ENCODE measurements at regions of chr16 and their contacts with region 1.

Region 1: GRCh38 chr16:4402439-4403132 is 13.8 kb downstream of the CORO7 start:
- DNase-seq: peak; percentile 52
- H3K4me3 Mint-ChIP-seq: no peak overlapping the region
- H3K27ac Mint-ChIP-seq: no peak overlapping the region
- H3K4me1 Mint-ChIP-seq: no peaks in the 10 kb centered on the region
- H3K27me3 Mint-ChIP-seq: no peaks in the 10 kb centered on the region

Region 2: GRCh38 chr16:4288148-4288921 is 114.3 kb before region 1 on chr16:
- intact Hi-C with region 1: loop called (anchors 5 kb)
- DNase-seq: peak; percentile 70
- H3K4me3 Mint-ChIP-seq: no peak overlapping the region
- H3K27ac Mint-ChIP-seq: peak overlapping the region; percentile 63
- H3K4me1 Mint-ChIP-seq: peaks cover 14% of the 10 kb centered on the region
- H3K27me3 Mint-ChIP-seq: no peaks in the 10 kb centered on the region

Region 3: GRCh38 chr16:4358831-4359561 is 43.6 kb before region 1 on chr16:
- intact Hi-C with region 1: loop called (anchors 1 kb)
- DNase-seq: peak; percentile 49
- H3K4me3 Mint-ChIP-seq: no peak overlapping the region
- H3K27ac Mint-ChIP-seq: peak overlapping the region; percentile 34
- H3K4me1 Mint-ChIP-seq: no peaks in the 10 kb centered on the region
- H3K27me3 Mint-ChIP-seq: no peaks in the 10 kb centered on the region

Region 4: DNA sequence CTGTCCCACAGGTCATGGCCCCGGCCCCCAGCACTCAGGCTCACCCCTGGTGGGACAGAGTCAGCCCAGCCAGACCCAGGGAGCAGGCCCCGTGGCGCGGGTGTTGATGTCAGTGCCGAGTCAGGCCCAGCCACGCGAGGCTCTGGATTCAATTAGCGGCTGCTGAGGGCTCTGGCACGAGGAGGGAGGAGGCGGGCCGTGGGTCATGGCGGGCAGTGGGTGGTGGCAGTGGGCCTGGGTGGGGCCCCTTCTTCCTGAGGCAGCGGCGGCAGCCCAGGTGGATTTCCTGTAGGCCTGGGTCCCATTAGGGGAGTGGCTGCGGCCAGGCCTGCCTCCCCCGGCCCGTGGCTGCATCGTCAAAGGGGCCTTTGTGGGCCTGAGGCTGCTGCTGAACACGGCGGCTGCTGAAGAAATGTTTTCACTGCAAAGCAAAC is 18.1 kb before region 1 on chr16:
- intact Hi-C with region 1: no loop called
- DNase-seq: no peak
- H3K4me3 Mint-ChIP-seq: no peak overlapping the region
- H3K27ac Mint-ChIP-seq: no peak overlapping the region
- H3K4me1 Mint-ChIP-seq: no peaks in the 10 kb centered on the region
- H3K27me3 Mint-ChIP-seq: no peaks in the 10 kb centered on the region

Measured in activated T-helper 1 cell treated with anti-CD3 and anti-CD28 coated beads, Interleukin-12 subunit alpha, Interleukin-12 subunit beta, Interleukin-2, Interleukin-4 antibody, amounts not matched to agents 30 ng/mL and 10 ng/mL and 1 ng/mL, durations not matched to agents 14 hours and 24 hours and 36 hours (primary cell).